ENCODE measurements at regions of chr1 and their contacts with region 1.

Region 1: DNA sequence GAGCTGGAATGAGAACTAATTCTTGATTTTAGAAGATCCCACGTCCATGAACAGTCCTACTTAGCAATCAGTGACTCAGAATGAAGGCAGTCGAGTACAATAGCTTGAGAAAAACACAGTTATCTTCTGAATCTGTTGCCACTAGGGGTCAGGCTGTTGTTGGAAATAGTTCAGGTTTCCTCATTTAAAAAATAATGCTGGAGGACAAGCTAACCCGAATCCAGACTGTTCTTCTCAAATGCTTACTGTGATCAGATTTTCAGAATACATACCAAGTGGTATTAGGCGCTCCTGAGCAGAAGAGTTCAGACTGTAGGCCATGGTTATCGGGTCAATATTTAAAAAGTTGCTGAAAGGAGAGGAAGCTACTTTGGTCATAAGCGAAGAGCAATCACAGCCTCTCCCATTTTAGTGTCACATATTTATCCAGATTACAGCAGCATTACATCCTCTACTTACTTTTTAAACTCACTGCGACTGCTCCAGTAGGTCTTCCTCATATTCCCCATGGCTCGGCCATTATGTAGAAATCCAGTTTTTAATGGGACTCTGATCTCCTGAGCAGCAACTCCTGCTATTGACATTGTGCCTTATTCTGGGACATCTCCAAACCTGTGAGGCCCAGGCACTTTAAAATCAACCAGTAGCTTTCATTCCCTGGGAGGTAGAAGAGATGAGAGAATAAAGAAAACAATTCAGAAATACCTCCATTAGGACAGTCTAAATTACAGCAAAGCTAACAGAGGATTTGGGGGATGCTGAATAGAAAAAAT is 10.9 kb downstream of the ERRFI1 start:
- DNase-seq: peak; percentile 68
- ATAC-seq: peak; percentile 57
- H3K4me3 ChIP-seq: no peak overlapping the region
- H3K4me3 Mint-ChIP-seq: no peak overlapping the region
- H3K27ac ChIP-seq: no peak overlapping the region
- H3K27ac Mint-ChIP-seq: no peak overlapping the region
- H3K4me1 ChIP-seq: peaks cover 3 to 8% of the 10 kb centered on the region in 2 donors
- H3K4me1 Mint-ChIP-seq: peaks cover 4% of the 10 kb centered on the region
- H3K27me3 ChIP-seq: peaks cover 0 to 25% (median 11%) of the 10 kb centered on the region in 4 experiments
- H3K27me3 Mint-ChIP-seq: peaks cover 27% of the 10 kb centered on the region
- CTCF ChIP-seq: peak; percentile 80

Region 2: DNA sequence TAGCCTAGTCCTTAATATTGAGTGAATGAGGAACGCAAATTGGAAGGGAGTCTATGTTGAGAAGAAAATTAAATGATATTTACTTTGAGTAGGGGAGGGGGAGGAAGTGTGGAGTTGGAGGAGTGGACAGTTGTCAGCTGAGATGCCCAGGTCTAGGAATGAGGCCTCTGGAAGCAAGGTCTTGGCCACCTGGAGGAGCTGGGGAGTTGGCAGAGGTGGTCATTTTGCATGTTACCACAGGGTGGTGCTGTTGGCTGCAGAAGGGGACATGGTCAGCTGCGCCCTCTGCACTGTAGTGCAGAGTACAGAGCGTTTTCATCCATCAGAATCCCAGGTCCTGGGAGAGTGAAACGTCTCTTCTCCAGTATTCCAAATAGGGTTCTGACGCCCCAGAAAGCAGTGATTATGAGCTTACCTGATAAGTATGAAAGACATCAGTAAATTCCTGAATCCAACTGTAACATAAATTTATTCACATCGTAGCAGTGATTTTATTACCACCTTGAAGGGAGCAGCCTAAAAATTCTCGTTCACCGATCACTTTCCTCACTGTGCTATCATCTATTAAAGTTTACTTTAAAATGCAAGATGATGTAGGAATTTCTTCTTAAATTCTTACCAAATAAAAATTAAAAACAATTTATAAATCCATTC is 39.9 kb before region 1 on chr1:
- CTCF ChIA-PET with region 1: interaction called, 11 read pairs
- POLR2A ChIA-PET with region 1: no interaction called
- intact Hi-C with region 1: no loop called
- DNase-seq: peak; percentile 46
- ATAC-seq: peak; percentile 43
- H3K4me3 ChIP-seq: no peak overlapping the region
- H3K4me3 Mint-ChIP-seq: no peak overlapping the region
- H3K27ac ChIP-seq: no peak overlapping the region
- H3K27ac Mint-ChIP-seq: no peak overlapping the region
- H3K4me1 ChIP-seq: no peaks in the 10 kb centered on the region
- H3K4me1 Mint-ChIP-seq: no peaks in the 10 kb centered on the region
- H3K27me3 ChIP-seq: no peaks in the 10 kb centered on the region
- H3K27me3 Mint-ChIP-seq: no peaks in the 10 kb centered on the region
- CTCF ChIP-seq: peak; percentile 68

Region 3: DNA sequence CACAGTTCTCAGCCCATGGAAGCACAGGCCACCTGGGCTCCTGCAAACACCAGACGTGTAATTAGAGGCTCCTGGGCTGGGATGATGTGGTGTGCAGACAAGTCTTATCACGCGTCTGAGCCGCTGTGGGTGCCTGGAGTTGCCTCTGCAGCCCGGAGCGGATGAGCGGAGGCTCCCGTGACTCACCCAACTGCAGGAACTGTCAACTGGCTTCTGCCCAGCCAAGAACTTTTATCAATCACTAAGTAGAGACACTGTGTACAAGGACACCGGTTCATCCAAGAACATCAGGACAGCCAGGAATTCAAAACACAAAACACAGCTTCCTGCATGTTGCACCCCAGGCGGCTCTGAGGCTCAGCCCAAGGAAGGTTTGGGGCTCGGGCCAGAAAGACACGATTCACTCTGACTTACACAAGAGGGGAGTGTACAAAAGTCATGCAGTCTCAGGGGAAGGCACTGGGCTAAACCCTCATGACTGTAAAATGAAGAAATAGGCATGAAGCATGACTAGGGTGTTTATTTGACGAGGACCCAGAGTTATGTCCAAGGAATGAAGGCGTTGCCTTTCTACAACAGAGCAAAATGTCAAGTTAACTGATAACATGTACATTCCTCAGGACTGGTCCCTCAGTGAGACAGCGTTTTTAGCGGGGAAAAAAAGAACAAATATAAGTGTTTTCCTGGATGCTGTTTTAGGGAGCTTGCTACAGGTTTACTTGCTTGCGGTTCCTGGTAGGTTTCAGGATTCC is 10.2 kb before region 1 on chr1:
- CTCF ChIA-PET with region 1: interaction called, 11 read pairs
- POLR2A ChIA-PET with region 1: no interaction called
- intact Hi-C with region 1: no loop called
- DNase-seq: no peak
- ATAC-seq: no peak
- H3K4me3 ChIP-seq: no peak overlapping the region
- H3K4me3 Mint-ChIP-seq: no peak overlapping the region
- H3K27ac ChIP-seq: no peak overlapping the region
- H3K27ac Mint-ChIP-seq: no peak overlapping the region
- H3K4me1 ChIP-seq: no peaks in the 10 kb centered on the region
- H3K4me1 Mint-ChIP-seq: no peaks in the 10 kb centered on the region
- H3K27me3 ChIP-seq: no peaks in the 10 kb centered on the region
- H3K27me3 Mint-ChIP-seq: no peaks in the 10 kb centered on the region
- CTCF ChIP-seq: no peak

Region 4: DNA sequence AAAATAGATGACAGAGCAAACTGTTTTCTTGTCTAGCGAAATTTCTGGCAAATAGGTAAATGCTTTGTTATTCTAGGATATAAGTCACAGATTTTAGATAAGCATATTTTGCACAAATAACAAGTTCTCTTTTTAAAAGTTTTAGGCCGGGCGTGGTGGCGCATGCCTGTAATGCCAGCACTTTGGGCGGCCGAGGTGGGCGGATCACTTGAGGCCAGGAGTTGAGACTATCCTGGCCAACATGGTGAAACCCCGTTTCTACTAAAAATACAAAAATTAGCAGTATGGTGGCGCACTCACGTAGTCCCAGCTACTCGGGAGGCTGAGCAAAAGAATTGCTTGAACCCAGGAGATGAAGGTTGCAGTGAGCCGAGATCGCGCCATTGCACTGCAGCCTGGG is 31.2 kb after region 1 on chr1:
- CTCF ChIA-PET with region 1: no interaction called
- POLR2A ChIA-PET with region 1: no interaction called
- intact Hi-C with region 1: no loop called
- DNase-seq: no peak
- ATAC-seq: no peak
- H3K4me3 ChIP-seq: no peak overlapping the region
- H3K4me3 Mint-ChIP-seq: no peak overlapping the region
- H3K27ac ChIP-seq: no peak overlapping the region
- H3K27ac Mint-ChIP-seq: no peak overlapping the region
- H3K4me1 ChIP-seq: no peaks in the 10 kb centered on the region
- H3K4me1 Mint-ChIP-seq: no peaks in the 10 kb centered on the region
- H3K27me3 ChIP-seq: no peaks in the 10 kb centered on the region
- H3K27me3 Mint-ChIP-seq: peaks cover 20% of the 10 kb centered on the region
- CTCF ChIP-seq: no peak

Region 5: DNA sequence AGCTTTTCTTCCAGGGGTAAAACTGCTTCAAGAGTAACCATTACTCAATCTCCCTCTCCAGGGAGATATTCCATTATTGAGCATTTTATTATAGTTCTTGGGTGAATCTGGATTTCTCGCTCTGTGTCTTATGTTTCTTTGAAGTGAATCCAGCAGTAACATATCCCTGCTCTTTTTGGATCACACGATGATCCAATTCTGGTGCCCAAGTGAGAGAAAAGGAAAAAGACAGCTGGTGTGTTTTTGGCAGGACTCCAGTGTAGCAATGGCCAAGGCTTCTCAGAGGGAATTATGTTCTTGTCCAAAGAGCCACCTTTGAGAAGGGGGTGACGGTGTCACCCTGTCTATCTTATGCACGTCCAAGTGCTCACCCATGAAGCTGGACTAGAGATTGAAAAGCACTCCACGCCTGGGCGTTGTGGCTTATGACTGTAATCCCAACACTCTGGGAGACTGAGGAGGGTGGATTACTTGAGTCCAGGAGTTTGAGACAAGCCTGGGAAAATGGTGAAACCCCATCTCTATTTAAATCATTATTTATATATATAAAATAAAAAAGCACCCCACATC is 151.3 kb after region 1 on chr1:
- CTCF ChIA-PET with region 1: interaction called, 10 read pairs
- POLR2A ChIA-PET with region 1: no interaction called
- intact Hi-C with region 1: no loop called
- DNase-seq: no peak
- ATAC-seq: no peak
- H3K4me3 ChIP-seq: no peak overlapping the region
- H3K4me3 Mint-ChIP-seq: no peak overlapping the region
- H3K27ac ChIP-seq: no peak overlapping the region
- H3K27ac Mint-ChIP-seq: no peak overlapping the region
- H3K4me1 ChIP-seq: peaks cover 5 to 11% of the 10 kb centered on the region in 2 donors
- H3K4me1 Mint-ChIP-seq: peaks cover 11% of the 10 kb centered on the region
- H3K27me3 ChIP-seq: no peaks in the 10 kb centered on the region
- H3K27me3 Mint-ChIP-seq: peaks cover 10% of the 10 kb centered on the region
- CTCF ChIP-seq: no peak

Region 6: DNA sequence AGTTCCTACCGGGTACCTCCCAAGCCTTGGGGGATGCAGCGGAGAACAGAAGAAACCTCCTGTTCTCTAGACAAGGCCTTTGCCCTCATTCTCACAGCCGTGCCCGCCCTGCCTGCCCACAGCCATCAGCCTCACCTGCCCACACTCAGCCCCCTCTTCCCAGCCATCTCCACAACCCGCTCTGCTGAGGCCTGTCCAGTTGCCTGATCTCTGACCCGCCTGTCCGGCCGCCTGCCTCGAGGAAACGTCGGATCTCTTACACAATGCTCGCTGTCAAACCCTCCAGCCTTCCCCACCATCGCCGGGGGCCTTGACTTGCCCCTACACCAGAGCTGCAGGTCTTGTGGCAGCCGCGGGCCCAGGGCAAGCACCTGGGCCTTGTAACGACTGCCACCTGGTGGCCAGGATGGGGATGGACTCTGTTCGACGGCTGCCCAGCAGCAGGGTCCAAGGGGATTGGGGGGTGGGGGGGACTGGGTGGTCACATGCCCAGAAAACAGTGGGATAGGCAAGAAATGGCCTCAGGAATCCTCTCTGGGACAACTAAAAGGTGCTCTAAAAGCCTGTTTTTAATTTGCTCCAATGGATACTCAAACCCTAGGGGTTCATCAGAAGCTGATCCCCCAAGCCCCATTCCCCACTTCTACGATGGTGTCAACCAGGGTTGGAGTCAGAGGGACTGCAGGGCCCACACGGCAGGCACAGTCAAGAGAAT is 333.7 kb after region 1 on chr1:
- CTCF ChIA-PET with region 1: interaction called, 182 read pairs
- POLR2A ChIA-PET with region 1: no interaction called
- intact Hi-C with region 1: loop called (anchors 1 kb)
- DNase-seq: peak; percentile 78
- ATAC-seq: peak; percentile 89
- H3K4me3 ChIP-seq: no peak overlapping the region
- H3K4me3 Mint-ChIP-seq: no peak overlapping the region
- H3K27ac ChIP-seq: no peak overlapping the region
- H3K27ac Mint-ChIP-seq: peak overlapping the region; percentile 61
- H3K4me1 ChIP-seq: peaks cover 3% of the 10 kb centered on the region in 2 donors
- H3K4me1 Mint-ChIP-seq: peaks cover 4% of the 10 kb centered on the region
- H3K27me3 ChIP-seq: peaks cover 0 to 3% (median 0%) of the 10 kb centered on the region in 4 experiments
- H3K27me3 Mint-ChIP-seq: peaks cover 8% of the 10 kb centered on the region
- CTCF ChIP-seq: peak; percentile 85

Measured in B cell (primary cell).